ENCODE measurements at regions of chr17 and their contacts with region 1.

Region 1: GRCh38 chr17:47615766-47616424 is 33.8 kb upstream of the KPNB1 start:
- DNase-seq: no peak
- H3K4me3 Mint-ChIP-seq: no peak overlapping the region
- H3K27ac Mint-ChIP-seq: no peak overlapping the region
- H3K4me1 Mint-ChIP-seq: peaks cover 11% of the 10 kb centered on the region
- H3K27me3 Mint-ChIP-seq: no peaks in the 10 kb centered on the region

Region 2: GRCh38 chr17:47229535-47230443 is 386.1 kb before region 1 on chr17:
- CTCF ChIA-PET with region 1: interaction called, 6 read pairs
- intact Hi-C with region 1: loop called (anchors 1 kb)
- DNase-seq: peak; percentile 90
- H3K4me3 Mint-ChIP-seq: peak overlapping the region; percentile 34
- H3K27ac Mint-ChIP-seq: no peak overlapping the region
- H3K4me1 Mint-ChIP-seq: peaks cover 9% of the 10 kb centered on the region
- H3K27me3 Mint-ChIP-seq: peaks cover 3% of the 10 kb centered on the region

Region 3: DNA sequence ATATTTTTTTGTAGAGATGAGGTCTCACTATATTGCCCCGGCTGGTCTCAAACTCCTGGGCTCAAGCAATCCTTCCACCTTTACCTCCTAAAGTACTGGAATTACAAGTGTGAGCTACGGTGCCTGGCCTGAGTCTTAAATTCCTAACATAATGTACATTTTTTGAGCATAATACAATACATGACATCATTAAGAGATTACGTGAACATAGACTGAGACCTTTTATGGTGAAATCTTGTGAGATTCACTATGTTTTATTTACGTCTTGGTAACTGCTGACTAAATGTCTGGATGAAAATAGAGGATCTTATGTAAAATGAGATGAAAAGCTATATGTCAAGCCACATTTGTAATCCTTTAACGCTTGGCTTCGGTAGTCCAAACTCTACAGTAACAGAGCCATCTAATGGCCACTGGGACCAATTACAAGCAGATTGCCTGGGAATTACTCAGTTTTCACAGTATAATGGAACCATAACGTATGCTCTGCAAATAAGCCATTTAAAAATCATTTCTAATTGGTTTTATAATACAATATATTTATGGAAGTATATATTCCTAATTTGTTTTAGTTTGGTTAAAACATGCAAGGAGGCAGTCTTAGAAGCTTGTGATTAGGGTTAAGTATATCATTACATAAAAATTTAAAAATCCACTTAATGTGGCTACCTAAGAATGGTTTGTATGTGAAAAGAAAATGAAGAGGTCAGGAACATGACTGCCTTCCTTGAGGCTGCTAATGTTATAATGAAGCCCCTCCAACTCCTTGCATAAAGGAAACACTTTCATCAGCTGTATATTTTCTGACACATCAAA is 300.2 kb before region 1 on chr17:
- CTCF ChIA-PET with region 1: interaction called, 3 read pairs
- intact Hi-C with region 1: loop called (anchors 2 kb)
- DNase-seq: peak; percentile 56
- H3K4me3 Mint-ChIP-seq: no peak overlapping the region
- H3K27ac Mint-ChIP-seq: no peak overlapping the region
- H3K4me1 Mint-ChIP-seq: no peaks in the 10 kb centered on the region
- H3K27me3 Mint-ChIP-seq: no peaks in the 10 kb centered on the region

Region 4: GRCh38 chr17:47363171-47363570 is 252.7 kb before region 1 on chr17:
- CTCF ChIA-PET with region 1: interaction called, 17 read pairs
- intact Hi-C with region 1: loop called (anchors 1 kb)
- DNase-seq: no peak
- H3K4me3 Mint-ChIP-seq: no peak overlapping the region
- H3K27ac Mint-ChIP-seq: no peak overlapping the region
- H3K4me1 Mint-ChIP-seq: no peaks in the 10 kb centered on the region
- H3K27me3 Mint-ChIP-seq: no peaks in the 10 kb centered on the region